WTC11 (cell line): ENCODE measurements at regions of chr11 and their contacts with region 1.

Region 1: GRCh38 chr11:62974848-62975522 is 9.8 kb downstream of the SLC22A6 start:
- DNase-seq: peak; percentile 71
- ATAC-seq: peak; percentile 98
- H3K4me3 Mint-ChIP-seq: no peak overlapping the region
- H3K27ac Mint-ChIP-seq: no peak overlapping the region
- H3K4me1 Mint-ChIP-seq: peaks cover 3% of the 10 kb centered on the region; the same call in 1 of the 2 replicates
- H3K27me3 Mint-ChIP-seq: peaks cover 17% of the 10 kb centered on the region
- CTCF ChIP-seq: no peak

Region 2: DNA sequence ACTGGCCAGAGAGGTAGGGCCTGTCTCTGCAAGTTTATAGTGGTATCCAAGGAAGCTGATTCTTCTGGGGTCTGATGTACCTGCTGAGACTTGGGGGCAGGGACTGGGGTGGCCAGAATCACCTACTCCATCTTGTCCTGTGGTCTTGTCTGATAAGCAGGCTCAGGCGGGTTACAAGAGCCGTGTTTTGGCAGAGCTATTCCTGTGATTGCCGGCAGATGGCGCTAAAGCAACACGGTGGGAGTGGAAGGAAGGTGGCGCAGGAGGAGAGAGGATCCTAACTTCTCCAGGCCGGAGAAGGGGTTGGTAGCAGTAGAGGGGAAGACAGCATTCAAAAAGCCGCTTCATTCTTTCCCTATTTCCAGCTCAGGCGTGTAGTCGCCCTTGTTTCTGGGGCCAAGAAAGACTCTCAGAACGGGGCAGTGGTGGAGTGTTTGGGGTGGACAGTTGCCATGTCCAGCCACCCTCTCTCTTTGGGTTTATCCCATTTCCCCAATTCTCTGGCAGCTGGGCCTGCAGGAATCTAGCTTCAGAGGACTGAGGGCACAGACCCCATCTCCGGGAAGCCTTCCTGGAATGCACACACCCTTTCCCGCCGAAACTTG is 69.0 kb before region 1 on chr11:
- CTCF ChIA-PET with region 1: interaction called, 302 read pairs
- POLR2A ChIA-PET with region 1: no interaction called
- DNase-seq: peak; percentile 94
- ATAC-seq: peak; percentile 54
- H3K4me3 Mint-ChIP-seq: no peak overlapping the region
- H3K27ac Mint-ChIP-seq: no peak overlapping the region
- H3K4me1 Mint-ChIP-seq: peaks cover 31% of the 10 kb centered on the region
- H3K27me3 Mint-ChIP-seq: peaks cover 13% of the 10 kb centered on the region
- CTCF ChIP-seq: peak; percentile 99

Region 3: GRCh38 chr11:62931499-62932278 is 43.3 kb before region 1 on chr11:
- CTCF ChIA-PET with region 1: interaction called, 52 read pairs
- POLR2A ChIA-PET with region 1: no interaction called
- DNase-seq: no peak
- ATAC-seq: no peak
- H3K4me3 Mint-ChIP-seq: no peak overlapping the region
- H3K27ac Mint-ChIP-seq: no peak overlapping the region
- H3K4me1 Mint-ChIP-seq: peaks cover 23% of the 10 kb centered on the region
- H3K27me3 Mint-ChIP-seq: peaks cover 34% of the 10 kb centered on the region
- CTCF ChIP-seq: no peak

Region 4: GRCh38 chr11:62958547-62959421 is 16.2 kb before region 1 on chr11:
- CTCF ChIA-PET with region 1: interaction called, 32 read pairs
- POLR2A ChIA-PET with region 1: no interaction called
- DNase-seq: no peak
- ATAC-seq: no peak
- H3K4me3 Mint-ChIP-seq: no peak overlapping the region
- H3K27ac Mint-ChIP-seq: no peak overlapping the region
- H3K4me1 Mint-ChIP-seq: peaks cover 8% of the 10 kb centered on the region
- H3K27me3 Mint-ChIP-seq: no peaks in the 10 kb centered on the region; the same call in none of the 2 replicates
- CTCF ChIP-seq: no peak

Region 5: GRCh38 chr11:62999649-63000048 is 24.7 kb after region 1 on chr11:
- CTCF ChIA-PET with region 1: interaction called, 25 read pairs
- POLR2A ChIA-PET with region 1: interaction called, 5 read pairs
- DNase-seq: no peak
- ATAC-seq: peak; percentile 37; the same call in 1 of the 2 replicates
- H3K4me3 Mint-ChIP-seq: no peak overlapping the region
- H3K27ac Mint-ChIP-seq: no peak overlapping the region
- H3K4me1 Mint-ChIP-seq: peaks cover 10% of the 10 kb centered on the region
- H3K27me3 Mint-ChIP-seq: no peaks in the 10 kb centered on the region; the same call in 1 of the 2 replicates
- CTCF ChIP-seq: no peak

Region 6: DNA sequence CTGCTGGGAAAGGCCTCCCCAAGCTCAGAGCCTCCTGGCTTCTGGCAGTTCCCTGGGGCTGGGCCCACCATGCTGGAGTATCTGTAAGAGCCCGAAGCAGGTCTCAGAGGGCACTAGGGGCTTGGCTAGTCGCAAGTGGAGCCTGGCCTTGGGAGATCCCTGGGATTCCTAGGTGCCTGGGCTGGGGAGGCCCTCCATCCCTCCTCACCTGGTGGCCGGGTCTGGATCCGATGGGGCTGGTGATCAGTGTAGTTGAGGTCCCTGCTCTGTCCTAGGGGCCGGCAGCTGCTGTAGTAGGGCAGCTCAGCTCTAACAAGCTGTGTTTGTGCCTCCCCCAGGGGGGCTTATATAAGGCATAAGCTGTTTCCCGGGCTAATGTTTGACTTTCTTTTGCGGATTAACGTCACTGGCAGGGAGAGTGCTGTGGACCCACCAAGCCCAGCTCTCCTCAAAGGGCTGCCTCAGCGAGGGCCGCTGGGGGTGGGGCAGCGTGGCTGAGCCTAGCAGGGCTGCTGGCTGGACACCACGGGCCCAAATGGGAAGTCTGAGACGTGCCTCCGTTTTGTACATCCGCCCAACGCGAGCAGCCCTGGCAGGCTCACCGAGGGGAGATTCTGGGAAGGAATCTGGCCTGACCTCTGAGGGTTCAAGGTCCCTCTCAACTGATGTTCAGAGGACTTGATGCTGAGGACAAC is 40.7 kb after region 1 on chr11 and contains the start of gene SLC22A8:
- CTCF ChIA-PET with region 1: interaction called, 155 read pairs
- POLR2A ChIA-PET with region 1: interaction called, 3 read pairs
- DNase-seq: no peak
- ATAC-seq: peak; percentile 27
- H3K4me3 Mint-ChIP-seq: no peak within 1 kb of the TSS
- H3K27ac Mint-ChIP-seq: no peak within 1 kb of the TSS
- H3K4me1 Mint-ChIP-seq: peaks cover 20% of the 10 kb centered on the region
- H3K27me3 Mint-ChIP-seq: peaks cover 5% of the 10 kb centered on the region; the same call in 1 of the 2 replicates
- CTCF ChIP-seq: no peak
- total RNA-seq, gene SLC22A8: not detected in 3 replicates